Thyroid gland (tissue), 4 donors: ENCODE measurements at regions of chr7 and their contacts with region 1.

Region 1: GRCh38 chr7:25259587-25260243 is 31.4 kb upstream of the NPVF start:
- DNase-seq: peak; percentile 69 to 76
- H3K4me3 ChIP-seq: no peak overlapping the region
- H3K27ac ChIP-seq: no peak overlapping the region
- H3K4me1 ChIP-seq: no peaks in the 10 kb centered on the region
- H3K27me3 ChIP-seq: no peaks in the 10 kb centered on the region
- CTCF ChIP-seq: peak; percentile 42 to 97 (median 84)
- POLR2A ChIP-seq: no peak

Region 2: DNA sequence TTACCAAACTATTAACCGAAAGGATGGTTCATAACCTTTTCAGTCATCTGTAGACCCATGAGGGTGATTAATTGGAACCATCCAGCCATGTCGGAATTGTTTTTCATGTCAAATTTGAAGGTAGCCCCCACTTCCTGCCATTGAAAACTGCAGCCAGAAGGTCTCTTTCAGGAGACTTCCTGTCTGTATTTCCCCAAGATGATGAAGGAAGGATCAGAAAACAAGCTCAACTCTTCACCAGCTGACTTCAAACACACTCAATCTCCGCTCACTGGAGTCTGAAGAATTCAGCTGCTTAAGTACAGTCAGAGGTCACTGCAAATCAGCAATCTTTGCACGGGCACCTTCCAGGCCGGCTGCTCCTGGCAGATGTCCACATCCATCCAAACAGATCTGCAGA is 260.3 kb after region 1 on chr7:
- intact Hi-C with region 1: no loop called
- DNase-seq: peak; percentile 44 to 66
- H3K4me3 ChIP-seq: no peak overlapping the region
- H3K27ac ChIP-seq: no peak overlapping the region
- H3K4me1 ChIP-seq: peaks cover 0 to 5% of the 10 kb centered on the region in 2 donors
- H3K27me3 ChIP-seq: no peaks in the 10 kb centered on the region
- CTCF ChIP-seq: no peak
- POLR2A ChIP-seq: no peak

Region 3: DNA sequence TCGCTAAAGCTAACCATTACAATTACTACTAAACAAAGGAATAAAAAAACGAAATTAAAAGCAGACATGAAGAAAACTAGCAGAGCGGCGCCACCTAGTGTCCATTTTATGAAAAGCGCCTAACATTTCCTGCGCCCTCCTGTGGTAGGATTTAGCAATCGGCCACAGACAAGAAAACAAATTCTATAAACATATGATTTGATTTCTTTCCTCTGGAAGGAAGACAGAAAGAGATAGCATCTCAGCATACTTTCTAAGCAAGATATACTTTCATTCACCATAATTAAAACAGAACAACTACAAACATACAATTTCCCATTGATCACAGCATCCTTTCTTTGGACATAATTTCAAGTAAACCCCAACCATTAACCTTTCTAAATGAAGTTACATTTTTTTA is 306.2 kb after region 1 on chr7:
- intact Hi-C with region 1: loop called (anchors 5 kb)
- DNase-seq: peak; percentile 48 to 66
- H3K4me3 ChIP-seq: no peak overlapping the region
- H3K27ac ChIP-seq: no peak overlapping the region
- H3K4me1 ChIP-seq: no peaks in the 10 kb centered on the region
- H3K27me3 ChIP-seq: no peaks in the 10 kb centered on the region
- CTCF ChIP-seq: peak; percentile 98 to 100 (median 99)
- POLR2A ChIP-seq: no peak